K562 (cell line): ENCODE measurements at regions of chr3 and their contacts with region 1.

Region 1: GRCh38 chr3:132029182-132029902 is 5.5 kb downstream of the CPNE4 start:
- DNase-seq: peak; percentile 50 to 78 (median 54)
- ATAC-seq: peak; percentile 97
- H3K4me3 ChIP-seq: no peak overlapping the region
- H3K27ac ChIP-seq: no peak overlapping the region
- H3K4me1 ChIP-seq: no peaks in the 10 kb centered on the region
- H3K27me3 ChIP-seq: no peaks in the 10 kb centered on the region
- CTCF ChIP-seq: peak; percentile 70 to 79 (median 74)
- EP300 ChIP-seq: no peak
- POLR2A ChIP-seq: no peak
- RAD21 ChIP-seq: peak; percentile 68 to 75

Region 2: GRCh38 chr3:131033480-131034080 is 995.8 kb before region 1 on chr3:
- CTCF ChIA-PET with region 1: interaction called, 4 read pairs
- POLR2A ChIA-PET with region 1: no interaction called
- in situ Hi-C with region 1: loop called (anchors 25 kb)
- intact Hi-C with region 1: loop called (anchors 2 kb)
- DNase-seq: peak; percentile 18 to 57 (median 21)
- ATAC-seq: peak; percentile 69; the same call in 2 of the 3 replicates
- H3K4me3 ChIP-seq: no peak overlapping the region
- H3K27ac ChIP-seq: no peak overlapping the region
- H3K4me1 ChIP-seq: no peaks in the 10 kb centered on the region
- H3K27me3 ChIP-seq: no peaks in the 10 kb centered on the region
- CTCF ChIP-seq: peak; percentile 34 to 66 (median 37); a peak in 4 of 6 replicates
- EP300 ChIP-seq: no peak
- POLR2A ChIP-seq: no peak
- RAD21 ChIP-seq: peak; percentile 73 to 80

Region 3: GRCh38 chr3:131794766-131795388 is 234.5 kb before region 1 on chr3:
- CTCF ChIA-PET with region 1: interaction called, 11 read pairs
- POLR2A ChIA-PET with region 1: no interaction called
- in situ Hi-C with region 1: loop called (anchors 10 kb)
- intact Hi-C with region 1: loop called (anchors 1 kb)
- DNase-seq: peak; percentile 30 to 48 (median 44)
- ATAC-seq: peak; percentile 95
- H3K4me3 ChIP-seq: no peak overlapping the region
- H3K27ac ChIP-seq: no peak overlapping the region
- H3K4me1 ChIP-seq: peaks cover 0 to 8% of the 10 kb centered on the region in 2 experiments; a peak in 2 of 5 replicates
- H3K27me3 ChIP-seq: no peaks in the 10 kb centered on the region
- CTCF ChIP-seq: peak; percentile 68 to 98 (median 89)
- EP300 ChIP-seq: no peak
- POLR2A ChIP-seq: no peak
- RAD21 ChIP-seq: peak; percentile 52 to 70